Mammary epithelial cell (primary cell): ENCODE measurements at regions of chr20 and their contacts with region 1.

Region 1: DNA sequence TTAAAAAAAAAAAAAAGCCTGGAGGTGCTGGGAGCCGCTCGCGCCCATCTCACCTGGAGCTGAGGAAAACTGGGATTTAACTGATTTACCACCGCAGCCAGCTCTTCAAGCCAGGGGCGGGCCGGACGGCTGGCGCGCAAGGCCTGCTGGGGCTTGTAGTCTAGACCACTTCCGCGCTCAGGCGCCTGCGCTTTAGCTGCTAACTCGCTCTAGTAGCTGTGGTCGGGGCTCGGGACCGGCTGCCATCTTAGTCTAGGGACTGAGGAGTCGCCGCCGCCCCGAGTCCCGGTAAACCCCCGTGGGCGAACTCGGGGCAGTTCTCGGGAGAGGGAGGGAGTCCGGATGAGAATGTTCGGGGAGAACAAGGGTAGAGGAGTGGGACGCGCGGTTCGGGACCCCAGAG is at the start of gene ITCH:
- DNase-seq: peak; percentile 92
- H3K4me3 ChIP-seq: peak within 1 kb of the TSS; percentile 83 to 98 (median 95)
- H3K27ac ChIP-seq: peak within 1 kb of the TSS; percentile 89
- H3K4me1 ChIP-seq: peaks cover 39% of the 10 kb centered on the region
- H3K27me3 ChIP-seq: no peaks in the 10 kb centered on the region
- CTCF ChIP-seq: no peak
- total RNA-seq, gene ITCH: 91.4 to 127 TPM

Region 2: GRCh38 chr20:34190679-34191090 is 172.4 kb before region 1 on chr20:
- CTCF ChIA-PET with region 1: no interaction called
- dilution Hi-C with region 1: no loop called
- in situ Hi-C with region 1: no loop called
- intact Hi-C with region 1: no loop called
- DNase-seq: peak; percentile 68
- H3K4me3 ChIP-seq: no peak overlapping the region
- H3K27ac ChIP-seq: no peak overlapping the region
- H3K4me1 ChIP-seq: no peaks in the 10 kb centered on the region
- H3K27me3 ChIP-seq: no peaks in the 10 kb centered on the region
- CTCF ChIP-seq: peak; percentile 84 to 89

Region 3: GRCh38 chr20:34334654-34335407 is 28.2 kb before region 1 on chr20:
- CTCF ChIA-PET with region 1: no interaction called
- dilution Hi-C with region 1: no loop called
- in situ Hi-C with region 1: no loop called
- intact Hi-C with region 1: loop called (anchors 1 kb)
- DNase-seq: peak; percentile 66
- H3K4me3 ChIP-seq: no peak overlapping the region
- H3K27ac ChIP-seq: peak overlapping the region; percentile 93
- H3K4me1 ChIP-seq: peaks cover 27% of the 10 kb centered on the region
- H3K27me3 ChIP-seq: no peaks in the 10 kb centered on the region
- CTCF ChIP-seq: no peak

Region 4: DNA sequence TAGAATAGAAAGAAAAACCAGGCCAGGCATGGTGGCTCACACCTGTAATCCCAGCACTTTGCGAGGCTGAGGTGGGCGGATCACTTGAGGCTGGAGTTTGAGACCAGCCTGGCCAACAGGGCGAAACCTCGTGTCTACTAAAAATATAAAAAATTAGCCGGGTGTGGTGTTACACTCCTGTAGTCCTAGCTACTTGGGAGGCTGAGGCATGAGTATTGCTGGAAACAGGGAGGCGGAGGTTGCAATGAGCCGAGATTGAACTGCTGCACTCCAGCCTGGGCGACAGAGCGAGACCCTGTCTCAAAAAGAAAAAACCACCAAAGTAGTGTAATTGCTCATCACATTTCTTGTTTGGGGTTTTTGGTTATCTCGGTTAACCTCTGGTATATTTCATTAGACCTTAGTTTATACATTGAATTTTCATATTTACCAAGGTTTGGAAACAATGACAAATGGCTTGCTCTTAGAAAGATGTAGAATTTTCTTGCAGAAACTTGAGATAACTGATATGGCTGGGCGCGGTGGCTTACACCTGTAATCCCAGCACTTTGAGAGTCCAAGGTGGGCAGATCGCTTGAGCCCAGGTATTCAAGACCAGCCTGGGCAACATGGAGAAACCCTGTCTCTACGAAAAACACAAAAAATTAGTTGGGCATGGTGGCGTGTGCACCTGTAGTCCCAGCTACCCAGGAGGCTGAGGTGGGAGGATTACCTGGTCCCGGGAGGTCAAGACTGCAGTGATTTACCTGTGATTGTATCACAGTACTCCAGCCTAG is 14.2 kb after region 1 on chr20:
- CTCF ChIA-PET with region 1: no interaction called
- dilution Hi-C with region 1: no loop called
- in situ Hi-C with region 1: no loop called
- intact Hi-C with region 1: no loop called
- DNase-seq: no peak
- H3K4me3 ChIP-seq: no peak overlapping the region
- H3K27ac ChIP-seq: no peak overlapping the region
- H3K4me1 ChIP-seq: no peaks in the 10 kb centered on the region
- H3K27me3 ChIP-seq: no peaks in the 10 kb centered on the region
- CTCF ChIP-seq: no peak

Region 5: DNA sequence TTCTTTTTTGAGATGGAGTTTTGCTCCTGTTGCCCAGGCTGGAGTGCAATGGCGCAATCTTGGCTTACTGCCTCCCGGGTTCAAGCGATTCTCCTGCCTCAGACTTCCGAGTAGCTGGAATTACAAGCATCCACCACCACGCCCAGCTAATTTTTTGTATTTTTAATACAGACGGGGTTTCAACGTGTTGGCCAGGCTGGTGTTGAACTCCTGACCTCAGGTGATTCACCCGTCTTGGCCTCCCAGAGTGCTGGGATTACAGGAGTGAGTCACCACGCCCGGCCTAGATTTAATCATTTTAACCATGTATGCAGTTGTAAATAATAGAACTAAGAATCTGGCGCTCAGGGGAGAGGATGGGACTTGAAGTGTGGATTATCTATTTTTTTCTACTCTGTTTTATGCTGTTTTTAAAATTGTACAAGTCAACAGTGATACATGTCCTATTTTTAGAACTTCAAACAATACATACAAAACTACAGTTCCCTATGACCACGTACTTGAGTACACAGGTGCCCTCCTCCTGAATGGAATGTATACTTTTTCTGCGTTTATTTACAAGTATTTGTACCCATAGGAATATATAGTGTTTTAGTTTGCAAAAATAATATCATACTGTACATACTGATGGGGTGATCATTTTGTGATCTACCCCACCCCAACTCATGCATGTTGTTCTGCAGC is 27.8 kb after region 1 on chr20:
- CTCF ChIA-PET with region 1: no interaction called
- dilution Hi-C with region 1: no loop called
- in situ Hi-C with region 1: no loop called
- intact Hi-C with region 1: loop called (anchors 2 kb)
- DNase-seq: peak; percentile 95
- H3K4me3 ChIP-seq: no peak overlapping the region
- H3K27ac ChIP-seq: peak overlapping the region; percentile 55
- H3K4me1 ChIP-seq: peaks cover 35% of the 10 kb centered on the region
- H3K27me3 ChIP-seq: no peaks in the 10 kb centered on the region
- CTCF ChIP-seq: no peak

Region 6: DNA sequence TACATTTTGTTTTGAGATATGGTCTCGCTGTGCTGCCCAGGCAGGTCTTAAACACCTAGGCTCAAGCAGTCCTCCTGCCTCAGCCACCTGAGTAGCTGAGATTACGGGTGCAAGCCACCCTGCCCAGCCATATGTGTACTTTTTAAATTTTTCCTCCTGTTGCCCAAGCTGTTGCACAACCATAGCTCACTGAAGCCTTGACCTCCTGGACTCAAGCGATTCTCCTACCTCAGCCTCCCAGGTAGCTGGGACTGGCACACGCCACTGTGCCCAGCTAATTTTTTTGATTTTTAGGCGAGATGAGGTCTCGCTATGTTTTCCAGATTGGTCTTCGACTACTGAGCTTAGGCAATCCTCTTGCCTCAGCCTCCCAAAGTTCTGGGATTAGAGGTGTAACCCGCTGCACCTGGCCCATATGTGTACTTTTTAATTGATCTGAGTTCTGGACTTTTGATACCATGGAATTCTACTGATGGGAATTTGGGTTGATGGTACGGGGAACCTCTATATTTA is 45.0 kb after region 1 on chr20:
- CTCF ChIA-PET with region 1: no interaction called
- dilution Hi-C with region 1: loop called (anchors 5 kb)
- in situ Hi-C with region 1: no loop called
- intact Hi-C with region 1: no loop called
- DNase-seq: no peak
- H3K4me3 ChIP-seq: no peak overlapping the region
- H3K27ac ChIP-seq: no peak overlapping the region
- H3K4me1 ChIP-seq: peaks cover 4% of the 10 kb centered on the region
- H3K27me3 ChIP-seq: no peaks in the 10 kb centered on the region
- CTCF ChIP-seq: no peak